ENCODE measurements at regions of chr6 and their contacts with region 1.

Region 1: DNA sequence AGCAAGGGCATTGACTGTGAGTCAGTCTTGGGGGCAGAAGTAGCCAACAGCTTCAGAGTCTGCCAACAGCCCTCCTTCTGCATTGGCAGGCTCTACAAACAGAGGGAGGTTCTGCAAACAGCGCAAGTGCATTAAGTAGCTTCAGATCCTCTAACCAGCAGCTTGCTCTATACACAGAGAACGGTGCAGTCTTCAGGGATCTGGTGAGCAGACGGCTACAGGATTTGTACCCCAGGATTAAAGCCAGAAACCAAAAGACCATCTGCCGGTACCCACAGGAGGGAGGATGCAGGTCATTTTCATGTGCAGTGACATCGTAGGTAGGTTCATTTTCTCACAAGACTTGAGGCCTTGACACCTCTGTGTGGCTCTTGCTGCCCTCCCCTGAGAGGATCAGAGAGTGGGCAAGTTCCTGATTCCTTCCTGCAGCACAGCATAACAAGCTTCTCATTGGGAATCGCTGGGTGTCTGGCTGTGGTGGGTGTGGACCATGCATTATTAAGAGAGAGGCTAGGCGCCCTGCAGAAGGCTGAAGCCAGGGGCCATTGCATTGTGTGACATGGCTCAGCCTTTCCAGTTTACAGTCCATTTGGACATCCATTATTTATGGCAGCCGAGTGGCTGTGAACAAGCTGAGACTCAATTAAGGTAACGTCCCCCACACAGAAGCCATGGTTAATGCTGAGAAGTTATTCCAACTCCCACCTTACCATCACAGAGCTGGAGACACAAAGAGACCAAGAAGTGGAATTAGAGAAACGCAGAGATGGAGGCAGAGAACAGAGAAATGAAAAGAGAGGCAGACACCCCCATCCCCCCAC is 250.0 kb downstream of the LRFN2 start:
- DNase-seq: no peak
- H3K4me3 ChIP-seq: no peak overlapping the region
- H3K27ac ChIP-seq: no peak overlapping the region
- H3K4me1 ChIP-seq: no peaks in the 10 kb centered on the region
- H3K27me3 ChIP-seq: peaks cover 2% of the 10 kb centered on the region
- CTCF ChIP-seq: no peak

Region 2: DNA sequence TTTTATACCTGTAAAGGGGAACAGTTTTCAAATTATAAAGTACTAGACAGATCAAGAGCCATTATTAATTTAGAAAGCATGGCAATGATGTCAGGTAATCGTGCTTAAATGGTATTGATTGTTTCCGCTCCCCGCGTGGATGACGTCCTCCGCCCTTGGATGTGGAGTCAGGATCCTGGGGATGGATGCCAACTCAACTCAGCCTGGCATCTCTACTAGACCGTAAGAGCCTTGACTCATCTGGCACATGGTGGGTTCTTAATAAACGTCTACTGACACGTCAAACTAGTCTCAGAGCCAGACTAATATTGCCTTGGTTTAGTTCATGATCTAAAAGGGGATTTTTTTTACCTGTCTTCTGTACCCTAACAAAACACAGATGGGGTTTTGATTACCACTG is 169.8 kb after region 1 on chr6:
- CTCF ChIA-PET with region 1: no interaction called
- dilution Hi-C with region 1: no loop called
- in situ Hi-C with region 1: no loop called
- intact Hi-C with region 1: no loop called
- DNase-seq: no peak
- H3K4me3 ChIP-seq: no peak overlapping the region
- H3K27ac ChIP-seq: no peak overlapping the region
- H3K4me1 ChIP-seq: no peaks in the 10 kb centered on the region
- H3K27me3 ChIP-seq: no peaks in the 10 kb centered on the region
- CTCF ChIP-seq: no peak

Region 3: GRCh38 chr6:40550202-40551101 is 213.3 kb after region 1 on chr6:
- CTCF ChIA-PET with region 1: no interaction called
- dilution Hi-C with region 1: loop called (anchors 10 kb)
- in situ Hi-C with region 1: no loop called
- intact Hi-C with region 1: no loop called
- DNase-seq: peak; percentile 19
- H3K4me3 ChIP-seq: no peak overlapping the region
- H3K27ac ChIP-seq: no peak overlapping the region
- H3K4me1 ChIP-seq: no peaks in the 10 kb centered on the region
- H3K27me3 ChIP-seq: no peaks in the 10 kb centered on the region
- CTCF ChIP-seq: peak; percentile 72 to 77

Region 4: DNA sequence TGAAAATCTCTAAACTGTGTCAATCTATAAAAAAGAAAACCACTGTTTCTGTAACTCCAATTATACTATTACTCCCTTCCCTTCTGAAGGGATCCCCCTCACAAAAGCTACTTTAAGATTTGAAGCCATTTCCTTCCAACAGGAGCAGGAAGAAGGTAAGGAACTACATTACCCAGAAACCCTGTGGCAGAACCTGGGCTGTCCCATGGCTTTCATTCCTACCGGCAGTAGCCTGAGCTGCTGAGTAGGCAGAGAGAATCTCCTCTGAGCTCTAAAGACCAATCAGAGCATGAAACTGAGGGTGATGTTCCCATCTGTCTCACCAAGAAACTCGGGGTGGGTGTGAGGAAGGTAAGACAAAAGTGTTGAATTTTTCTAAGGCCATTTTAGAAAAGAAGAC is 358.0 kb after region 1 on chr6:
- CTCF ChIA-PET with region 1: no interaction called
- dilution Hi-C with region 1: no loop called
- in situ Hi-C with region 1: no loop called
- intact Hi-C with region 1: no loop called
- DNase-seq: no peak
- H3K4me3 ChIP-seq: no peak overlapping the region
- H3K27ac ChIP-seq: no peak overlapping the region
- H3K4me1 ChIP-seq: no peaks in the 10 kb centered on the region
- H3K27me3 ChIP-seq: no peaks in the 10 kb centered on the region
- CTCF ChIP-seq: no peak

Region 5: DNA sequence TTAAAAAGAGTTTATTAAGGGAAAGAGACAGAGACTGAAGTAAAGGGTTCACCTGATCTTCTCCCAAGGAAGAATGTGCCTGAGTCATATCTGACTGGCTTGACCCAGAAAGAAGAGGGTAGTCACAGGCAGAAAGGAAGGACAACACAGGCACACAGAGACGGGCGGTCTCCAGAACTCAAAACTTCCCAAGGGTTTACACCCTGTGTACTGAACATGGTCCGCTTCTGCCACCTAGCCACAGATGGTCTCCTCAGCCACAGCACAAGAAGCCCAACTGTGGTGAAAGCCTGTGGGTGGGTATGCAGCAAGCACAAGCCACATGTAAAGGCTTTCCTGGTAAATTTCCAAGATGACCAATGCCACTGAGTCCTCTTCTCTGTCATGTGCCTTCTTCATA is 684.7 kb after region 1 on chr6:
- CTCF ChIA-PET with region 1: no interaction called
- dilution Hi-C with region 1: loop called (anchors 5 kb)
- in situ Hi-C with region 1: loop called (anchors 25 kb)
- intact Hi-C with region 1: no loop called
- DNase-seq: peak; percentile 70
- H3K4me3 ChIP-seq: no peak overlapping the region
- H3K27ac ChIP-seq: peak overlapping the region; percentile 71
- H3K4me1 ChIP-seq: peaks cover 32% of the 10 kb centered on the region
- H3K27me3 ChIP-seq: no peaks in the 10 kb centered on the region
- CTCF ChIP-seq: peak; percentile 7 to 42